A549 (cell line): ENCODE measurements at regions of chr12 and their contacts with region 1.

Region 1: DNA sequence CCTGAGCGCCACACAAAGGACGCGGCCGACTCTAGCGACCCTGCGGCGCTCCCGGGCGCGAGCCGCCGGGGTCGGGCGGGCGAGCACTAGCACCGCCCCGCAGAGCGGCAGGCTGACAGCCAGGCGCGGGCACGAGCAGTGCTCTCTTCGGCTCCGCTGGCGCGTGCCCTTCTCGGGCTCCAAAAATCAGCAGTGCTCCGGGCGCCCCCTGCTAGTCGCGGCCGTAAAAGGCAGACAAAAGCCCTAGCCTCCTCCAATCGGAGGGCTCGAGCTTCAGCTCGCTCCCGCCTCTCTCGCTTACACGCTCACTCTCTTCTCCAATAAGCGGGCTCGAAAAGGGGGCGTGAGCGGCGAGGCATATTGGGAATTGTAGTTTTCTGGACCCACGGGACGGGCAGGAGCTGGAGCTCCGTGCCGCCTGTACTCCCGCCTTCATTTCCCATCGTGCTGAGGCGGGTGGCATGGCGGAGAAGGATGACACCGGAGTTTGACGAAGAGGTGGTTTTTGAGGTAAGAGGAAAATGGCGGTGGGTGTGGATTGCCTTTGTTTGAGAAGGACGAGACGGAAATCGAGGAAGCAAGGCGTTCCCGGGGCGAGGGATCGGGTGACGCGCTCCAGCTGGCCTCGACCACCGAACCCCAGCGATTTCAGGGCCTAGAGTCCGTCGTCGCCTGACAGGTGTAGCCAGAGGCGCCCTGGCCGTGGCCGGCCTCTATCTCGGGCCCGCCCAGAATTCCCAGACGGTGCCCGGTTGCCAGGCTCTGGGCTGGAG is at the starts of genes FGD6 and VEZT:
- DNase-seq: peak; percentile 95 to 99
- ATAC-seq: peak; percentile 90 to 93
- H3K4me3 ChIP-seq: peak within 1 kb of the TSS; percentile 83
- H3K27ac ChIP-seq: peak within 1 kb of the TSS; percentile 91 to 93
- H3K4me1 ChIP-seq: peaks cover 57% of the 10 kb centered on the region; the same call in 2 of the 3 replicates
- CTCF ChIP-seq: peak; percentile 71
- EP300 ChIP-seq: no peak
- POLR2A ChIP-seq: peak; percentile 67
- RAD21 ChIP-seq: peak; percentile 85 to 94
- polyA plus RNA-seq, gene FGD6: 42.0 and 48.0 TPM in 2 replicates
- polyA plus RNA-seq, gene VEZT: 256 and 259 TPM in 2 replicates

Region 2: GRCh38 chr12:95117178-95117599 is 100.4 kb before region 1 on chr12:
- CTCF ChIA-PET with region 1: interaction called, 28 read pairs
- POLR2A ChIA-PET with region 1: interaction called, 9 read pairs
- DNase-seq: peak; percentile 65 to 82
- ATAC-seq: peak; percentile 79 to 81
- H3K4me3 ChIP-seq: no peak overlapping the region
- H3K27ac ChIP-seq: peak overlapping the region; percentile 73 to 86
- H3K4me1 ChIP-seq: peaks cover 59% of the 10 kb centered on the region
- CTCF ChIP-seq: peak; percentile 83
- EP300 ChIP-seq: no peak
- POLR2A ChIP-seq: no peak
- RAD21 ChIP-seq: peak; percentile 93

Region 3: GRCh38 chr12:95147866-95148265 is 69.7 kb before region 1 on chr12:
- CTCF ChIA-PET with region 1: interaction called, 11 read pairs
- POLR2A ChIA-PET with region 1: interaction called, 3 read pairs
- DNase-seq: no peak
- ATAC-seq: no peak
- H3K4me3 ChIP-seq: no peak overlapping the region
- H3K27ac ChIP-seq: no peak overlapping the region
- H3K4me1 ChIP-seq: 0 out of 3 replicates have a peak, but pooled peaks cover 3% of the 10 kb centered on the region
- CTCF ChIP-seq: no peak
- EP300 ChIP-seq: no peak
- POLR2A ChIP-seq: no peak
- RAD21 ChIP-seq: no peak

Region 4: GRCh38 chr12:95173392-95174251 is 43.9 kb before region 1 on chr12:
- CTCF ChIA-PET with region 1: interaction called, 28 read pairs
- POLR2A ChIA-PET with region 1: interaction called, 10 read pairs
- DNase-seq: peak; percentile 70 to 90
- ATAC-seq: peak; percentile 78 to 85
- H3K4me3 ChIP-seq: no peak overlapping the region
- H3K27ac ChIP-seq: peak overlapping the region; percentile 80 to 92
- H3K4me1 ChIP-seq: peaks cover 94% of the 10 kb centered on the region
- CTCF ChIP-seq: no peak
- EP300 ChIP-seq: peak in 1 of 2 experiments; percentile 87; a peak in 4 of 5 replicates
- POLR2A ChIP-seq: no peak
- RAD21 ChIP-seq: no peak; a peak in 2 of 5 replicates

Region 5: DNA sequence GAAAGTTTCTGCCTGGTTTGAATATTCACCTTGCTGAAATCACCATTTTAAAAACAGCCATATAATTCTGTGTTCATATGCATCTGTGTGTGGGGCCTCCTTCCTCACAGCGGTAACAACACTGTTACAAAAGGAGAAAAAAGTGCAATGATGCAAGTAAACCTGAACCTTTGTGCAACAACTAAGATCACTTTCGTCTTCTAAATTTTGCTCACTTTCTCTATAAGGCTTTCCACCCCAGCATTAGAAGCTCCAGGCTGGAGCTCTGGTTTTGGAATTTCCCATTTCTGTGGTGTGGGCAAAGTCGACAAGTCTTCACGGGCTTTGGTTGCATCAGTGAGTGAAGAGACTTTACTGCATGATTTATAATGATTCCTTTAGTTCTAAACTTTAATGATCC is 18.6 kb before region 1 on chr12:
- CTCF ChIA-PET with region 1: interaction called, 54 read pairs
- POLR2A ChIA-PET with region 1: interaction called, 42 read pairs
- DNase-seq: peak in 1 of 2 experiments; percentile 31
- ATAC-seq: no peak
- H3K4me3 ChIP-seq: 0 out of 3 replicates have a peak overlapping the region, but pooled peaks have one; percentile 10
- H3K27ac ChIP-seq: peak overlapping the region; percentile 95 to 99
- H3K4me1 ChIP-seq: peaks cover 62% of the 10 kb centered on the region
- CTCF ChIP-seq: no peak
- EP300 ChIP-seq: no peak
- POLR2A ChIP-seq: no peak
- RAD21 ChIP-seq: no peak

Region 6: DNA sequence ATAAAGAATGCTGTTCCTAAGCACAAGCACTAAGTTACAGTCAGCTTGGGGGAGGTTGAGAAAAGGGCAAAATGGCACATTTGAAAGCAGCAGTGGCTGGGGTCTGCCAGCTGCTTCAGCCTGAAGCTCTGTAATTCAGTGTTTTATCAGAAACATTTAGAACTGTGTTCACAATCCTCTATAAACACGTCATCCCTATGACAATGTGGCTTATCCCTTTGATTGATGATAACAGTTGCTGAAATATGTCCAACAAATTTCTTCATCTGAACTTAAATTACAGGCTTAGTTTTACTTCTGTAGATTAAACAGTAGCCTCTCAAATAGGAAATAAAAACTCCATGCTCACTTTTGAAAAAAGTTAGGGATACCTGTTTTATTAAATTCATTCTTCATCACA is 108.9 kb after region 1 on chr12:
- CTCF ChIA-PET with region 1: no interaction called
- POLR2A ChIA-PET with region 1: interaction called, 12 read pairs
- DNase-seq: peak; percentile 53 to 87
- ATAC-seq: peak; percentile 81 to 84
- H3K4me3 ChIP-seq: no peak overlapping the region
- H3K27ac ChIP-seq: peak overlapping the region; percentile 88 to 89
- H3K4me1 ChIP-seq: peaks cover 77% of the 10 kb centered on the region
- CTCF ChIP-seq: no peak
- EP300 ChIP-seq: peak; percentile 82 to 85; a peak in 4 of 5 replicates
- POLR2A ChIP-seq: no peak
- RAD21 ChIP-seq: peak in 1 of 2 experiments; percentile 36; a peak in 3 of 5 replicates

Region 7: DNA sequence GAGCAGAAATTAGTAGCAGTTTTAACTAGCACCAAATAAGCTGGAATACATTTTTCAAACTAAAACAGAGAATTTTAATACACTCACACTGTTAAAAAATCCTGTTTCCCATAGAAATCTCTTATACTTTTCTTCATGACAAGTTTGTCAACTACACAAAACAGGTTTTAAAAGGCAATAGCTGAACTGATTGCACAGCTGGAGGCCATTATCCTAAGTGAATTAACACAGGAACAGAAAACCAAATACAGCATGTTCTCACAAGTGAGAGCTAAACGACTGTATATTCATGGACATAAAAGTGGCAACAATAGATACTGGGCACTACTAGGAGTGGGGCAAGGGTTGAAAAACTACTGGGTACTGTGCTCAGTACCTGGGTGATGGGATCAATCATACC is 790.2 kb after region 1 on chr12:
- CTCF ChIA-PET with region 1: no interaction called
- POLR2A ChIA-PET with region 1: no interaction called
- DNase-seq: no peak
- ATAC-seq: no peak
- H3K4me3 ChIP-seq: no peak overlapping the region
- H3K27ac ChIP-seq: no peak overlapping the region
- H3K4me1 ChIP-seq: no peaks in the 10 kb centered on the region
- CTCF ChIP-seq: no peak
- EP300 ChIP-seq: no peak
- POLR2A ChIP-seq: no peak
- RAD21 ChIP-seq: no peak